ENCODE measurements at regions of chr3 and their contacts with region 1.

Region 1: DNA sequence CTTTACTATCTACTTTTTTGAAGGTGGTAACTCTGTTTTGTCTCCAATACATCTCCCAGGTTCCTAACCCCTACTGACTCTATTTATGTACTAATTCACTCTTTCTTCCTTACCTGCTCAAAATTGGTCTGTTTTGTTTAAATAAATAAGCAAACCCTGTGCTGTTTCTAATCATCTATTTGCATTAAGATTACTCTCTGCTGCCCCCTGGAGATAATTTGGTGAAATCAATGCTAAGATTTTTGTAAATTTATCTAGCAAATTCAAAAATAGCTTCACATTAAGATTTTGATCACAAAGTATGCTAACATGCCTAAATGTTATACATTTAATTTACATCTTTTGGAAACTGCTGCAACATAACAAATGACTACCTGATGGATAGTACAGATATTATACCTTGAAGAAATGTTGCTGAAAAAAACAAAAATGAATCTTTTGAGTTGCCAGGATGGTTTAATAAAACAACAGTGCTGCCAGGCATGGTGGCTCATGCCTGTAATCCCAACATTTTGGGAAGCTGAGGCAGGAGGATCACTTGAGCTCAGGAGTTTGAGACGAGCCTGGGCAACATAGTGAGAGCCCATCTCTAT is 4.4 kb upstream of the CD200R1 start:
- DNase-seq: peak; percentile 20
- H3K27ac ChIP-seq: no peak overlapping the region
- CTCF ChIP-seq: peak; percentile 70

Region 2: GRCh38 chr3:112778391-112778948 is 200.9 kb before region 1 on chr3:
- CTCF ChIA-PET with region 1: no interaction called
- POLR2A ChIA-PET with region 1: no interaction called
- DNase-seq: peak; percentile 59
- H3K27ac ChIP-seq: no peak overlapping the region
- CTCF ChIP-seq: no peak

Region 3: GRCh38 chr3:112990672-112991602 is 11.6 kb after region 1 on chr3 and contains the start of gene GTPBP8:
- CTCF ChIA-PET with region 1: interaction called, 12 read pairs
- POLR2A ChIA-PET with region 1: no interaction called
- DNase-seq: peak; percentile 84
- H3K27ac ChIP-seq: peak within 1 kb of the TSS; percentile 97
- CTCF ChIP-seq: no peak